Activated T-helper 1 cell treated with anti-CD3 and anti-CD28 coated beads, Interleukin-12 subunit alpha, Interleukin-12 subunit beta, Interleukin-2, Interleukin-4 antibody, amounts not matched to agents 30 ng/mL and 10 ng/mL and 1 ng/mL, durations not matched to agents 14 hours and 24 hours and 36 hours (primary cell): ENCODE measurements at regions of chr3 and their contacts with region 1.

Region 1: GRCh38 chr3:72996473-72997333 is at the start of gene PPP4R2:
- DNase-seq: peak; percentile 90
- H3K4me3 Mint-ChIP-seq: peak within 1 kb of the TSS; percentile 96
- H3K27ac Mint-ChIP-seq: peak within 1 kb of the TSS; percentile 96
- H3K4me1 Mint-ChIP-seq: peaks cover 49% of the 10 kb centered on the region
- H3K27me3 Mint-ChIP-seq: no peaks in the 10 kb centered on the region
- total RNA-seq, gene PPP4R2: 113 and 125 TPM in 2 replicates

Region 2: GRCh38 chr3:72482589-72483321 is 513.9 kb before region 1 on chr3:
- intact Hi-C with region 1: no loop called
- DNase-seq: peak; percentile 47
- H3K4me3 Mint-ChIP-seq: peak overlapping the region; percentile 68
- H3K27ac Mint-ChIP-seq: peak overlapping the region; percentile 94
- H3K4me1 Mint-ChIP-seq: peaks cover 73% of the 10 kb centered on the region
- H3K27me3 Mint-ChIP-seq: no peaks in the 10 kb centered on the region

Region 3: DNA sequence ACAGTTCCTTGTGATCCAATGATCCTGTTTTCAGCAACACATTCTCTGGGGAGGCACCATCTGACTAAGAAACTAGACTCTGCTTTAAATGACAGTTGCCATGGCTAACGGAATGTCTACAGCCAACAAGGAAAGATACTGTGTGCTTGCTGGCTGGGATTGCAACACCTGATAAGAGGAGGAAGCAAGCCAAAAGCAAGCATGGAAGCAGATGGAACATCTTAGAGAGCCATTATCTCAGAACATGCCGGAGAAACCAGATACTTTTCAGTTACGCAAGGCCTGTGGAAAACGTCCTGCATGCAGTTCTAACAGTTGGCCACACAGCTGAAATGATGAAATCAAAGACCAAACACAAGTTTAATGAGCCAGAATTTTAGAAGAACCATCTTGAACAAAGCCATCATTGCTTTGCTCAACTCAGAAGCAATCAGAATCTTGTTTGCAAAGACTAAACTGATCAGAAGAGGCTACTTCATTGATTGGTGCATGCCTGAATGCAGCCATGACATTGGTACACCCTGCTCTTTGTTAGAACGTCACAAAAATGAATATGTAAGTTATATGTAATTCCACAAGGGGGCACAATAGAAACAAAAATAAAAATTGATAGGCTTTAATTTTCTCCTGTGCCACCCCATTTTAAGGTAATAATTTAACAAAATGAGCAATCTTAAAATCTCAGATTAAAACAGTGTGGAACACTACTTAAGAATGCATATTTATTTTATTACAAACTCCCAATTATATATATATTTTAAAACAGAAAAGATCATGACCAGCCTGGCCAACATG is 58.0 kb before region 1 on chr3:
- intact Hi-C with region 1: loop called (anchors 1 kb)
- DNase-seq: no peak
- H3K4me3 Mint-ChIP-seq: no peak overlapping the region
- H3K27ac Mint-ChIP-seq: no peak overlapping the region
- H3K4me1 Mint-ChIP-seq: no peaks in the 10 kb centered on the region
- H3K27me3 Mint-ChIP-seq: peaks cover 10% of the 10 kb centered on the region

Region 4: GRCh38 chr3:72977060-72977808 is 19.5 kb before region 1 on chr3:
- intact Hi-C with region 1: loop called (anchors 1 kb)
- DNase-seq: no peak
- H3K4me3 Mint-ChIP-seq: no peak overlapping the region
- H3K27ac Mint-ChIP-seq: peak overlapping the region; percentile 85
- H3K4me1 Mint-ChIP-seq: peaks cover 24% of the 10 kb centered on the region
- H3K27me3 Mint-ChIP-seq: peaks cover 4% of the 10 kb centered on the region

Region 5: DNA sequence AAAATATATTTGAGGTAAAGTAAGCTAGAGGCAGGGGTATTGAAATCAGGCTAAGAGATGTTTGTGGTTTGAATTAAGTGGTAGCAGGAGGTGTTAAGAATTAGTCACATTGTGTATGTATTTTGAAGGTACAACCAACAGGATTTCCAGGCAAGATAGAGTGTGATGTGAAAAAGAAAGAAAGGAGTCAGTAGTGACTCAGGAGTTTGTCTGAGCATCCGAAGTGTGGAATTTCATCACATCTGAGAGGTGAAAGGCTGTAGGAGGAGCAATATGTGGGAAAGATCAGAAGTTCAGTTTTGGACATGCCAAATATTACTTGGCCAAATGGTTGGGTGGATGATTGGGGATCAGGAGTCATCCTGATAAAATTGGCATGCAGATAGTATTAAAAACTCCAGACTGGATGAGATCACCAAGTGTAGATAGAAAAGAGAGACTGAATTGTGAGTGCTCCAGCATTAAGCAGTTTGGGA is 32.7 kb after region 1 on chr3:
- intact Hi-C with region 1: loop called (anchors 1 kb)
- DNase-seq: no peak
- H3K4me3 Mint-ChIP-seq: peak overlapping the region; percentile 1
- H3K27ac Mint-ChIP-seq: peak overlapping the region; percentile 70
- H3K4me1 Mint-ChIP-seq: peaks cover 56% of the 10 kb centered on the region
- H3K27me3 Mint-ChIP-seq: no peaks in the 10 kb centered on the region